ENCODE measurements at regions of chr15 and their contacts with region 1.

Region 1: GRCh38 chr15:45399381-45400212 is 21.3 kb upstream of the GATM start:
- DNase-seq: no peak
- H3K4me3 ChIP-seq: no peak overlapping the region
- H3K27ac ChIP-seq: no peak overlapping the region
- H3K4me1 ChIP-seq: peaks cover 8 to 40% (median 27%) of the 10 kb centered on the region in 6 donors
- H3K27me3 ChIP-seq: no peaks in the 10 kb centered on the region
- CTCF ChIP-seq: peak; percentile 16 to 68 (median 61)
- POLR2A ChIP-seq: no peak

Region 2: GRCh38 chr15:45166834-45167630 is 232.6 kb before region 1 on chr15:
- intact Hi-C with region 1: loop called (anchors 10 kb)
- DNase-seq: peak; percentile 97
- H3K4me3 ChIP-seq: peak overlapping the region; percentile 52 to 75 (median 62)
- H3K27ac ChIP-seq: peak overlapping the region; percentile 92 to 98 (median 98)
- H3K4me1 ChIP-seq: peaks cover 8 to 55% (median 25%) of the 10 kb centered on the region in 6 donors
- H3K27me3 ChIP-seq: no peaks in the 10 kb centered on the region
- CTCF ChIP-seq: peak; percentile 65 to 85 (median 79)
- POLR2A ChIP-seq: peak in 2 of 3 donors; percentile 11 to 46

Region 3: DNA sequence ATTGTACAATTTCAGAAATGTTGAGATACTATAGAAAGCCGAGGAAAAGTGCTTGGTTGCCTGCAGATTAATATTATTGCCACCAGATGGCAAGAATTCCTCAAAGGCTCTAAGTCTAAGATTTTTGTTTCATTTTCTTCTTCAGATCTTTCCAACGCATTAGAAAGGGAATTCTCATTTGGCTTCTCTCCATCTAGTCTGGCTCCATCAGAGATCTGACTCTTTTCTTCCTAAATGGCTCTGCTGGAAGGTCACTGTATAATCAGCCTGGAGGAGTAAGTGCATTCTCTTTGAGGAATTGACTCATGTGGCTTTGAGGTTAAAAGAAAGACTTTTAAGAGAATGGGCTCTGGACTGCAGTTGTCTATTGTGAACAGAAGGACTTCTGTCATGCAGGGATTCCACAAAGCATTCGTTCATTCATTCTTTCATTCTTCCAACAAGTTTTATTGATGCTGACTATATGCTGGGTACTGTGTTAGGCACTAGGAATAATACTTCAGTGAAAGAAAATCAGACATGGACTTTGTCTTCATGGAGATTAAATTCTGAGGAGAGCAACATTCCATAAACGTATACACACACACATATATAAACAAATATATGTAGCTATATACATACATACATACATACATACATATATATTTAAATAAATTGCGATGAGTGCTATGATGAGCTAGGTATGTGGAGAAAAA is 92.2 kb before region 1 on chr15:
- intact Hi-C with region 1: loop called (anchors 5 kb)
- DNase-seq: no peak
- H3K4me3 ChIP-seq: peak overlapping the region in 1 of 8 donors; percentile 41
- H3K27ac ChIP-seq: peak overlapping the region in 1 of 8 donors; percentile 2
- H3K4me1 ChIP-seq: peaks cover 0 to 12% (median 8%) of the 10 kb centered on the region in 6 donors
- H3K27me3 ChIP-seq: peaks cover 0 to 25% (median 0%) of the 10 kb centered on the region in 7 donors
- CTCF ChIP-seq: peak in 8 of 11 experiments; percentile 40 to 68 (median 59)
- POLR2A ChIP-seq: no peak

Region 4: DNA sequence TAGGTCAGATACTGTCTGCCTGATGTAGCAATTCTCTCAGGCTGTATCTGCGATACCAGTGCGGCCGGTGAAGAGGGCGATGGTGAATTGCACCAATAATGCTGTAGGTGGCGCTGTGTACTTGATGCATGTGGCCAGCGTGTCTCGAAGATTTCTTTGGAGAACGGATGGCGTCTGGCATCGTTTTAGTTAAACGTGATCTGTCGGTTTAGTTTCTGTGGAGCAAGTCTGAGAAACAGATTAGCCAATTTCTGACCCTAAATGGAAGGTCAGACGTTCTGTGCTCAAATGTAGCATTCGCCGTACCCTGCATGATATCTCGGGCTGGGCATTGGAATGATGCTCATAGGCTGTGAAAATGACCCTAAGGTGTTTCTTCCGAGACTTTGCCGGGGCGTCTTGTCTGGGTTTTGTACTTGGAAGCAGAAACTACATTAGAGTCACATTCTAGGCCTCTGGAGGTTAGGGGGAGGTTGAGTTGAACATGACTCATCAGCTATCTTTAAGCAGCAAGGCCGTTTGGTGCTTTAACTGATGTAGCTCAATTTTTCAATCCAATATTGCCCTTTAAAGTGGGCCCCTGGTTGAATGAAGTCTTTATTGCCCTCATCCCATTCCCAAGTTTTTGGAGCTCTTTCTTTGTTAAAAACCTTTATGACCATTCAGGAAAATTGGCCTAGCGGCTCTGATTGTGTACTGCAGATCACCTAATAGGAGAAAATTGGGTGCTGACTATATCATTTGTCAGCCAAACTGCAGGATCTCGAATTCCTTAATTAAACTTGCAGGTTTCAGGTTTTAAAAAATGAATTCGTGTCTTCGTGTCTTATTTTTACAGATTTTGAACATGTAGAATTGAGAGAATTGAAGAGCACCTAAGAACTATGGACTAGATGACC is 315.2 kb after region 1 on chr15:
- intact Hi-C with region 1: no loop called
- DNase-seq: no peak
- H3K4me3 ChIP-seq: no peak overlapping the region
- H3K27ac ChIP-seq: no peak overlapping the region
- H3K4me1 ChIP-seq: peaks cover 0 to 4% (median 0%) of the 10 kb centered on the region in 6 donors
- H3K27me3 ChIP-seq: peaks cover 0 to 22% (median 13%) of the 10 kb centered on the region in 7 donors
- CTCF ChIP-seq: peak; percentile 32 to 81 (median 66)
- POLR2A ChIP-seq: no peak

Region 5: GRCh38 chr15:45729141-45729540 is 329.5 kb after region 1 on chr15:
- intact Hi-C with region 1: no loop called
- DNase-seq: no peak
- H3K4me3 ChIP-seq: no peak overlapping the region
- H3K27ac ChIP-seq: no peak overlapping the region
- H3K4me1 ChIP-seq: no peaks in the 10 kb centered on the region
- H3K27me3 ChIP-seq: peaks cover 0 to 26% (median 0%) of the 10 kb centered on the region in 7 donors
- CTCF ChIP-seq: no peak
- POLR2A ChIP-seq: no peak